ENCODE measurements at regions of chr10 and their contacts with region 1.

Region 1: DNA sequence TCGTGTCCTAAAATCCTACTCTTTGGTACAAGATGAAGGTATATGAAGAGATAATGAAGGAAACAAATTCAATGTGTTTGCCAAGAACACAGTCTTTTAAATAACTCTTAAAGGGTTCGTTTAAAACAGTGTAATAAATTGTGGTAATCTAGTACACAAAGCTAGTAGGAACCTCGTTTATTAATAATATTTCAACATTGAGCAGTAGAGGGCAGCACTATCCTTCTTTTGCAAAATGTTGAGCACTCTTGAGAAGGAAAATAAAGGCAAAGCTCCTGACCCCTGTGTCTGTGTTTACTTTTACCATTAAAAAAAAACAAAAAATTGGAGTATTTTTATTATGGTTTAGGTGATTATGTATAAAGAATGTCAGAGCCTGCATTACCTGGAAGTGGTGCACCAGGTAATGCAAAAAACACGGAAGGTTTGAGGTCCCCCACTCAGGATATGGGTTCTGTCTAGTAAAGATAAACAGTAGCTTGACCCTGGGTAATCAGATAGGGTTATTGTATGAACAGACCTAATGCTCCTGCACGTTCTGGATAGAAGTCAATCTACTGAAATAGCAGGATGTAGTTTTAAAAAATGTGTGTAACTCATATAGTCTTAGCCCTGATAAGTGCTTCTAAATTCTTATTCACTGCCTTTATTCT is 5.7 kb upstream of the GOT1 start:
- DNase-seq: no peak
- H3K4me3 ChIP-seq: no peak overlapping the region
- CTCF ChIP-seq: peak; percentile 34

Region 2: DNA sequence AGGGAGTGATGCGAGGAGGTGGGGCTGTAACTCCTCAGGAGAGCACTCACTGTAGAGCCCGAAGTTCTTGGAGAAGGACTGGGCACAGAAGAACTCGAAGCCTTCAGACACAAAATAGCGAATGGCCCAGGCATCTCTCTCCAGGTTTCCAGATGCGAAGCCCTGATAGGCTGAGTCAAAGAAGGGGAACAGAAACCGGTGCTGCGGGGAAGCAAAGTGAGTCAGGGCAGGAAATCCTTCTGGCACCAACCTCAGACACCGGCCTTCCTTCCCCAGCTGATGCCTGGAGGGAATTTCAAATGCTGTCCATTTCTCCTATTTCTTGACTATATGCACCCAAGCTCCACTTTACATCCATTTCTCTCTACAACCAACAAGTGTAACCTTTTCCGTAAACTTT is 32.4 kb before region 1 on chr10:
- CTCF ChIA-PET with region 1: interaction called, 10 read pairs
- POLR2A ChIA-PET with region 1: no interaction called
- DNase-seq: no peak
- H3K4me3 ChIP-seq: no peak overlapping the region
- CTCF ChIP-seq: no peak

Region 3: DNA sequence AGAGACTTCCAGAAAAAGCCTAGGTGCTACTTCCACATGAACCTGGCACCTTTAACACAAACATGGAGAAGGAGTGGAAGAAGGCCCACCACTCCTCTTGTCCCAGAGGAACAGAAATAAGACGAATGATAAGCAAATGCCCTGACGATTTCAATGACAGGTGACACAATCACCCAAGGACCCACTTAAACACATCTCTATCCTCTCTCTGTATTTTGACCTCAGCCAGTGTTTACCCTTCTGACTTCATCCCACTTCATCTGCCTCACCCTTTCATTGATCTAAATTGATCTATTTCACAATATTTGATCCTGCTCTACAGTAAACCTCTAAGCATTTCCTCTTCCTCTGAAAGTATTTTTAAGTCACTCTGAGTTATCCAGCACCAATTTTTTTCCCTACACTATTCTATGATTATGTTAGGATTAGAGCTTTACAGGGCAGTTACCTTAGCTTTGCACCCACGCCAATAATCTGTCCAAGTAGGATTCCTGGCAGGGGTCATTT is 14.8 kb before region 1 on chr10:
- CTCF ChIA-PET with region 1: interaction called, 29 read pairs
- POLR2A ChIA-PET with region 1: no interaction called
- DNase-seq: no peak
- H3K4me3 ChIP-seq: no peak overlapping the region
- CTCF ChIP-seq: no peak

Region 4: GRCh38 chr10:99461230-99461629 is 25.1 kb after region 1 on chr10:
- CTCF ChIA-PET with region 1: interaction called, 24 read pairs
- POLR2A ChIA-PET with region 1: no interaction called
- DNase-seq: no peak
- H3K4me3 ChIP-seq: no peak overlapping the region
- CTCF ChIP-seq: no peak

Region 5: DNA sequence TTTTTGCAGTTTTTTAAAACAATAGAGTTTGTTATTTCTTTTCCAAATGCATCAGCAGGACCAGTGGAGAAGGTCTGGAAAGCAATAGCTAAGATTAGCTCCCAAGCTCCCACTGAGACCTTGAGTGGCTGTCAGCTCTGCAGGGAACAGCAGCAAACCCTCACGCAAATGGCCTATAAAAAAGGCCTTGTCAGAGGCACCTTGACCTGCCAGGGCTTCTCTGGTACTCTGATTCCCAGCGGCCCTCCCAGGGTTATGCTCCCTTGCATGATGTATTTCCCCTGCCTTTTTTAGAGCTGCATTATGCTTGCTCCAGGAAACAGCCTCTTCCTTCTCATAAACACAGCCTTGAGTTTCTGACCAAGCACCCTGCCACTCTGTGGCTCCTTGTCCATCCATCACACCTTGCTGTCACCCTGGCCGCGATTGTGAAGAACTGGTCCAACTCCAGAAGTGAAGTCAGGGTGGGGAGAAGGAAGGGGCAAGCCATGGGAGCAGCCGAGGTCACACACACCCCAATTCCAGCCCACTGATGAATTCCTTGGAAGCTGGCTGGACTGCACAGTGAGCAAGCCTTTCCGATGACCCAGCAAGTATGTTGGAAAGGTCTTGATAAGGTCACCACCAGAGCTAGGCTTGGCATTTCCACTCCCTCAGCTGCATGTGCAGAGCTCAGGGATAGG is 61.4 kb after region 1 on chr10:
- CTCF ChIA-PET with region 1: no interaction called
- POLR2A ChIA-PET with region 1: no interaction called
- DNase-seq: no peak
- H3K4me3 ChIP-seq: no peak overlapping the region
- CTCF ChIP-seq: no peak

Region 6: GRCh38 chr10:99560277-99561126 is 124.4 kb after region 1 on chr10:
- CTCF ChIA-PET with region 1: interaction called, 29 read pairs
- POLR2A ChIA-PET with region 1: no interaction called
- DNase-seq: no peak
- H3K4me3 ChIP-seq: no peak overlapping the region
- CTCF ChIP-seq: peak; percentile 56

Region 7: DNA sequence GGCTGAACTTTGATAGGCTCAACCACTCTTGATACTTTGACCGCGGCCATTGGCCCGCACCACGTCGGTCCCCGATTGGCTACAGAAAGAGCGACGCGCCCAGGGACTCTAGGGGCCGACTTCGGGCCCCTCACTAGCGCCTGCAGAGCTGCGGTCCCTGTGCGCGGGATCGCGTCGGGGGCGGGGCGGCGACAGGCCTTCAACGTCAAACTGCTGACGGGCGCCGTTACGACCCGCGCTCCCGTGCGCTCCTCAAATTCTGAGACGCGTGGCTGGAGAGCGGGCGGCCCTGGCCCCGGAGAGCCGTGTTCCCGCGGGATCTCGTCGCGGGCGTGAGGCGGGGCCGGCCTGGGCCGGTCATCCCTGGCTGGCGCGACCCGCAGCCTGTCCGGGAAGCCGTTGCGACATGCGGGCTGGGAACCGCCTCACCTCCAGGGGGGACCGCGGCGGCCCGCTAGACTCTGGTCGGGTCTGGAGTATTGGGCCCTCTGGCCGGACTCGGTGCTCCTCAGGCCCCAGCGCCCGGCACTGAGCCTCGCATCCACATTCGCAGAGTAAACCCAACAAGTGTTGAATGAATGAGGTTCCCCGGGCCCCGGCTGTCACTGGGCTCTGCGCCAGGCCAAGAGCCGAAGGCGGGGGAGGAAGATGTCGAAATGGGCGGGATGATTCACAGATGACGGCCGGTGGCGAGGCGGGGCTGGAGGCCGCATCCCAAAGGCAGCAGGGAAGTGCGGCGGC is 184.8 kb after region 1 on chr10:
- CTCF ChIA-PET with region 1: interaction called, 245 read pairs
- POLR2A ChIA-PET with region 1: no interaction called
- DNase-seq: peak; percentile 61
- H3K4me3 ChIP-seq: peak overlapping the region; percentile 67
- CTCF ChIP-seq: no peak